ENCODE measurements at regions of chr17 and their contacts with region 1.

Region 1: GRCh38 chr17:43694077-43694870 is 32.6 kb upstream of the MEOX1 start:
- DNase-seq: peak; percentile 61 to 89
- ATAC-seq: peak; percentile 82 to 100 (median 99)
- H3K4me3 ChIP-seq: no peak overlapping the region
- H3K4me3 Mint-ChIP-seq: no peak overlapping the region
- H3K27ac ChIP-seq: no peak overlapping the region
- H3K27ac Mint-ChIP-seq: no peak overlapping the region
- H3K4me1 ChIP-seq: peaks cover 5% of the 10 kb centered on the region
- H3K4me1 Mint-ChIP-seq: peaks cover 5 to 6% of the 10 kb centered on the region in 2 donors
- H3K27me3 ChIP-seq: peaks cover 10% of the 10 kb centered on the region
- H3K27me3 Mint-ChIP-seq: peaks cover 34 to 36% of the 10 kb centered on the region in 2 donors
- CTCF ChIP-seq: peak; percentile 92

Region 2: GRCh38 chr17:43641416-43641815 is 52.9 kb before region 1 on chr17:
- intact Hi-C with region 1: no loop called
- DNase-seq: no peak
- ATAC-seq: no peak
- H3K4me3 ChIP-seq: no peak overlapping the region
- H3K4me3 Mint-ChIP-seq: no peak overlapping the region
- H3K27ac ChIP-seq: no peak overlapping the region
- H3K27ac Mint-ChIP-seq: no peak overlapping the region
- H3K4me1 ChIP-seq: peaks cover 3% of the 10 kb centered on the region
- H3K4me1 Mint-ChIP-seq: no peaks in the 10 kb centered on the region
- H3K27me3 ChIP-seq: peaks cover 5% of the 10 kb centered on the region
- H3K27me3 Mint-ChIP-seq: peaks cover 8 to 18% of the 10 kb centered on the region in 2 donors
- CTCF ChIP-seq: no peak

Region 3: GRCh38 chr17:43760254-43760852 is 66.1 kb after region 1 on chr17:
- intact Hi-C with region 1: loop called (anchors 1 kb)
- DNase-seq: peak; percentile 85 to 93
- ATAC-seq: peak; percentile 92 to 98 (median 98)
- H3K4me3 ChIP-seq: no peak overlapping the region
- H3K4me3 Mint-ChIP-seq: no peak overlapping the region
- H3K27ac ChIP-seq: no peak overlapping the region
- H3K27ac Mint-ChIP-seq: no peak overlapping the region
- H3K4me1 ChIP-seq: peaks cover 34% of the 10 kb centered on the region
- H3K4me1 Mint-ChIP-seq: peaks cover 5 to 17% of the 10 kb centered on the region in 2 donors
- H3K27me3 ChIP-seq: peaks cover 31% of the 10 kb centered on the region
- H3K27me3 Mint-ChIP-seq: peaks cover 32 to 37% of the 10 kb centered on the region in 2 donors
- CTCF ChIP-seq: peak; percentile 98

Region 4: GRCh38 chr17:43846221-43846712 is 152.0 kb after region 1 on chr17:
- intact Hi-C with region 1: loop called (anchors 1 kb)
- DNase-seq: peak; percentile 68 to 79
- ATAC-seq: peak; percentile 94 to 100 (median 100)
- H3K4me3 ChIP-seq: no peak overlapping the region
- H3K4me3 Mint-ChIP-seq: no peak overlapping the region
- H3K27ac ChIP-seq: no peak overlapping the region
- H3K27ac Mint-ChIP-seq: no peak overlapping the region
- H3K4me1 ChIP-seq: no peaks in the 10 kb centered on the region
- H3K4me1 Mint-ChIP-seq: peaks cover 0 to 7% of the 10 kb centered on the region in 2 donors
- H3K27me3 ChIP-seq: no peaks in the 10 kb centered on the region
- H3K27me3 Mint-ChIP-seq: peaks cover 6 to 12% of the 10 kb centered on the region in 2 donors
- CTCF ChIP-seq: peak; percentile 95